PC-9 (cell line): ENCODE measurements at regions of chr2 and their contacts with region 1.

Region 1: DNA sequence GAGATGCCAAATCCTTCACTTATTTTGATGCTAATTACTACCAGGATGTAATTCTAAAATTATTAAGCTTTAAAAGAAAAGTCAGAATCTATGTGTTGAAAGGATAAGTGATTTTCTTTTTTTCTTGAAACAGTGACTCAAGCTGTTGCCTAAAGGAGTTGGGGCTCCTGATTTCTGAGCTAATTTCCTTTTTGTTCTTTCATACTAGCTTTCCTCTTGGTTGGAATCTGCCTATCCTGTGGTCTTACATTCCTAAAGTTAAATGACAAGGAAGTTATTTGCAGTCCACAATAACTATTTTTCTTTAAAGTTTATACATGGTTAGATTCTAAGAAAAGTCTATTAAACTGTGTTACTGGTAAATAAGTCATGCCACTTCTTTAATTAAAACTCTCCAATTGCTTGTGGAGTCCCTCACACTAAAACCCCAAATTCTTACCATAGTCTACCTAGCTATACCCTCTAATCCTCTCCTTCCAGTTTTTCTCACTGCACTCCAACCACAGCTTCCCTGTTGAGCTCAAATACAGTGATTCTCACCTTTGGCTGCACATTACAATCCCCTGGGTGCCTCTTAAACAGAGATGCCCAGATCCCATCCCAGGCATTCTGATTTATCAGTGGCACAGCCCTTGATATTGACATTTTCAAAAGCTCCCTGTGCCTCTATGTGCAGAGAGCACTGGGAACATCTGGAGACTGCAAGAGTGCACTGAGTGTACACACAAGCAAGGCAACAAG is 63.3 kb upstream of the EFEMP1 start:
- DNase-seq: peak in 1 of 2 experiments; percentile 48
- H3K4me3 ChIP-seq: no peak overlapping the region
- H3K27ac ChIP-seq: no peak overlapping the region
- H3K4me1 ChIP-seq: no peaks in the 10 kb centered on the region; the same call in 1 of the 2 replicates
- H3K27me3 ChIP-seq: no peaks in the 10 kb centered on the region
- CTCF ChIP-seq: no peak

Region 2: DNA sequence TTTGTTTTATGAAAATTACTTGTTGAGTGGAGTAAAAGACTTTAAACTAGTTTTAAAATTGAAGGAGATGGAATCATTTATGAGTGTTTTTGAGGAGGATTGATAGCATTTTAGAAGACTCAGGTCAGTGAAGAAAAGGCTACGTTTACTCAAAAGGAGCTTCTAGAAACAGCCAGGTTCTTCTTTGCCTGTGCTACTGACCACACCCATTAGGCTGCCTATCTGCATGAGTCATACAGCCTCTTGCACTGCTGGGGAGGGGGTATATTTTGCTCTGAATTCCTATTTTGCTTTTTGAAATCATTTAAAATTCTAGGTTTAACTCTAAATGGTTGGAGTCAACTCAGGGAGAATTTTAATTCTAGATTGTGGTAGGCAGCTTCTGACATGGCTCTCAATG is 85.5 kb before region 1 on chr2:
- CTCF ChIA-PET with region 1: no interaction called
- POLR2A ChIA-PET with region 1: interaction called, 12 read pairs
- intact Hi-C with region 1: no loop called
- DNase-seq: peak in 1 of 2 experiments; percentile 16
- H3K4me3 ChIP-seq: no peak overlapping the region
- H3K27ac ChIP-seq: no peak overlapping the region
- H3K4me1 ChIP-seq: peaks cover 21% of the 10 kb centered on the region
- H3K27me3 ChIP-seq: no peaks in the 10 kb centered on the region
- CTCF ChIP-seq: no peak

Region 3: GRCh38 chr2:56021579-56021978 is 34.7 kb after region 1 on chr2:
- CTCF ChIA-PET with region 1: no interaction called
- POLR2A ChIA-PET with region 1: no interaction called
- intact Hi-C with region 1: no loop called
- DNase-seq: no peak
- H3K4me3 ChIP-seq: no peak overlapping the region
- H3K27ac ChIP-seq: no peak overlapping the region
- H3K4me1 ChIP-seq: no peaks in the 10 kb centered on the region
- H3K27me3 ChIP-seq: no peaks in the 10 kb centered on the region
- CTCF ChIP-seq: no peak

Region 4: GRCh38 chr2:56102866-56103265 is 116.0 kb after region 1 on chr2:
- CTCF ChIA-PET with region 1: no interaction called
- POLR2A ChIA-PET with region 1: no interaction called
- intact Hi-C with region 1: no loop called
- DNase-seq: no peak
- H3K4me3 ChIP-seq: no peak overlapping the region
- H3K27ac ChIP-seq: no peak overlapping the region
- H3K4me1 ChIP-seq: no peaks in the 10 kb centered on the region
- H3K27me3 ChIP-seq: peaks cover 7% of the 10 kb centered on the region; the same call in 1 of the 2 replicates
- CTCF ChIP-seq: no peak